ENCODE measurements at regions of chr17 and their contacts with region 1.

Region 1: DNA sequence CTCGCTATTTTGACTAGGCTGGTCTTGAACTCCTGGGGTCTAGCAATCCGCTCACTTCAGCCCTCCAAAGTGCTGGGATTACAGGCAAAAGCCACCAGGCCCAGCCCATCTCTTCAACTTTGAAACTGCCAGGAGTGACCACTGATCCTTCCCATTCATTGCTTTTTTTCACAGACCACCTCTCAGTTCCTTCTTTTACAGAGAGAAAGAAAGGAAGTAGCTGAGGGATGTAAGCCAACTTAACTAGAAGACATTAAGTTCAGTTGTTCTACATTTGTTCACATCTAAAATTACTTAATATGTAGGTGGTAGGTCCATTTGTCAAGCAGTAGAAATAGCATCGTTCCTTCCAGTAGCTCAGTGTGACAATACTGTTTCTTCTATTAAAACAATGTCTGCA is 219.8 kb downstream of the STX8 start:
- DNase-seq: no peak
- H3K4me3 ChIP-seq: no peak overlapping the region
- H3K27ac ChIP-seq: no peak overlapping the region
- H3K4me1 ChIP-seq: no peaks in the 10 kb centered on the region
- H3K27me3 ChIP-seq: no peaks in the 10 kb centered on the region
- CTCF ChIP-seq: no peak
- POLR2A ChIP-seq: no peak

Region 2: GRCh38 chr17:7572588-7573323 is 1783.1 kb before region 1 on chr17:
- intact Hi-C with region 1: no loop called
- DNase-seq: peak; percentile 100
- H3K4me3 ChIP-seq: peak overlapping the region; percentile 92 to 100 (median 100)
- H3K27ac ChIP-seq: peak overlapping the region; percentile 98
- H3K4me1 ChIP-seq: peaks cover 8 to 9% of the 10 kb centered on the region in 2 donors
- H3K27me3 ChIP-seq: no peaks in the 10 kb centered on the region
- CTCF ChIP-seq: peak in 1 of 3 donors; percentile 24
- POLR2A ChIP-seq: peak; percentile 98

Region 3: DNA sequence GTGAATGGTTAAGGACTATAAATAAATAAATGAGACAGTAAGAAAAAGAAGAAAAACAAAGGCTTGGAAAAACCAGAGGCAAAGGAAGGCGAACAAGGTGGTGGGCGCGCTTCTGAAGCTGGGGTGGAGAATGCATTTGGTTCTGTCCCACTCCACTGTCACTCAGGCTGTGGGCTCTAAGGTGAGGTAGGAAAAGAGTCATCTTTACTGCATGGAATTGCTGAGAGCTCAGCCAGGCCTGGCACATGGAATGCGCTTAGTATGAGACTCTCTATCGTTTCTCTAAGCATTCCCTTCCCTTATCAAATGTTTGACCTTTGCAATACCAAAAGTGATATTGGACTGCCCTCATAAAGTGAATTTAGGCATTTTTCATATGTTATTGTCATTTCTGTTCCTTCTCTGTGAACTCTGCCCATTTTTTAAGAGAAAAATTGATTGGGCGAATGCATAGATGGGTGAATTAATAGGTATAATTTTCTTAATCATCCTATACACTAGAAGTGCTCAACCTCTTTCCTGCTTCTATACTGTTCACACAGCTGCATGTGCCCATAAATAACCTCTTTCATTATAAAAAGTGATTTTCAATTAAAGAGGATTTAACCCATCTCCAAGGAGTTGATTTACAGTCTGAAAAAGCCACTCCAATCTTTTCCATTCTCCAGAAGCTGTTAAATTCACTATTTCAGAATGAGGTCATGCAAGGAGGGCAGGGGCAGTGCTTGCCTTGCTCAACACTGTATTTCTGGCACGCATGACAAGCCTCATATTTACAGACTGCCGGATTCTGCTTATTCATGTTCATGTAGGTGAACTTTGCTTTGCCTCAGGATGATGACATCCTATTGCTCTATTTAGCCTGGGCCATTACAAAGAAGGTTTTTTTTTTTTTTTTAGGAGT is 813.0 kb before region 1 on chr17:
- intact Hi-C with region 1: no loop called
- DNase-seq: no peak
- H3K4me3 ChIP-seq: no peak overlapping the region
- H3K27ac ChIP-seq: no peak overlapping the region
- H3K4me1 ChIP-seq: no peaks in the 10 kb centered on the region
- H3K27me3 ChIP-seq: no peaks in the 10 kb centered on the region
- CTCF ChIP-seq: no peak
- POLR2A ChIP-seq: no peak

Region 4: GRCh38 chr17:9322326-9322725 is 33.5 kb before region 1 on chr17:
- intact Hi-C with region 1: loop called (anchors 2 kb)
- DNase-seq: no peak
- H3K4me3 ChIP-seq: no peak overlapping the region
- H3K27ac ChIP-seq: no peak overlapping the region
- H3K4me1 ChIP-seq: no peaks in the 10 kb centered on the region
- H3K27me3 ChIP-seq: no peaks in the 10 kb centered on the region
- CTCF ChIP-seq: no peak
- POLR2A ChIP-seq: no peak